ENCODE measurements at regions of chr21 and their contacts with region 1.

Region 1: GRCh38 chr21:39660191-39660980 is 47.6 kb downstream of the B3GALT5 start:
- DNase-seq: no peak

Region 2: GRCh38 chr21:39675993-39676661 is 15.7 kb after region 1 on chr21:
- intact Hi-C with region 1: loop called (anchors 2 kb)
- DNase-seq: no peak